Posterior cingulate gyrus (tissue), 11 donors: ENCODE measurements at regions of chr14 and their contacts with region 1.

Region 1: DNA sequence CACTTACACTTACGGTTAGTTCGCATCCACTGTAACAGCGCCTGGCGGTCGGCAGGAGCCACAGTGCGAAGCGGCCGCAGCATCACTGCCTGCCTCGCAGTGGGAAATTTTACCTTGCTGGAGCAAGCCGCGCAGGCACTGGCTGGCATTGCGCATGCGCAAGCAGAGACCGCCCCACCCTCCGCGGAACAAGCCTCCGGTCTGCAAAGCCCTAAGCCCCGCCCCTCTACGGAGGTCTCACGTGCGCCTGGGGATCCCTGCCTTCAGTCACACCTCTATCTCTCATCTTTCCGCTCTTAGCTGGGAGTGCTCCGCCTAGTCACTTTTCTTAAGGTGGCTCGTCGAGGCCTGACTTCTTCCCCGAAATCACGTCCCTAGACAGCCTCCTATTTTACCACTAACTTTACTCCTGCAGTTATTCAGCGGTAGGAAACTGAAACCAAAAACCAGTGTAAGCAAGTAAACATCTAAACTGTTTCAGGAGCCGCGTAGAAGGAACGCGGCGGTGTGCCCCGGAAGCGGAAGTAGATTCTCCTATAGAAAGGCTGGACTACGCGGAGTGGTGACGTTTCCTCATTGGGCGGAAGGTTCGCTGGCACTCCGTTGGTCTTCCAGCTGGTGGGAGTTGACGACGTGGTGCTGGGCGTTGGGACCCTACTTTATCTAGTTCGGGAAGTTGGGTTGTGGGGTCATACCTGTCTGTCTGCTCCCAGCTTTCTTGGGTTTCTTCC is at the start of gene SRP54:
- DNase-seq: peak; percentile 95 to 100 (median 98)

Region 2: GRCh38 chr14:34629657-34630529 is 352.7 kb before region 1 on chr14 and contains the start of gene SNX6:
- intact Hi-C with region 1: loop called (anchors 5 kb)
- DNase-seq: peak; percentile 77 to 99 (median 86)